Activated naive CD4-positive, alpha-beta T cell treated with anti-CD3 and anti-CD28 coated beads for 36 hours (primary cell): ENCODE measurements at regions of chr14 and their contacts with region 1.

Region 1: DNA sequence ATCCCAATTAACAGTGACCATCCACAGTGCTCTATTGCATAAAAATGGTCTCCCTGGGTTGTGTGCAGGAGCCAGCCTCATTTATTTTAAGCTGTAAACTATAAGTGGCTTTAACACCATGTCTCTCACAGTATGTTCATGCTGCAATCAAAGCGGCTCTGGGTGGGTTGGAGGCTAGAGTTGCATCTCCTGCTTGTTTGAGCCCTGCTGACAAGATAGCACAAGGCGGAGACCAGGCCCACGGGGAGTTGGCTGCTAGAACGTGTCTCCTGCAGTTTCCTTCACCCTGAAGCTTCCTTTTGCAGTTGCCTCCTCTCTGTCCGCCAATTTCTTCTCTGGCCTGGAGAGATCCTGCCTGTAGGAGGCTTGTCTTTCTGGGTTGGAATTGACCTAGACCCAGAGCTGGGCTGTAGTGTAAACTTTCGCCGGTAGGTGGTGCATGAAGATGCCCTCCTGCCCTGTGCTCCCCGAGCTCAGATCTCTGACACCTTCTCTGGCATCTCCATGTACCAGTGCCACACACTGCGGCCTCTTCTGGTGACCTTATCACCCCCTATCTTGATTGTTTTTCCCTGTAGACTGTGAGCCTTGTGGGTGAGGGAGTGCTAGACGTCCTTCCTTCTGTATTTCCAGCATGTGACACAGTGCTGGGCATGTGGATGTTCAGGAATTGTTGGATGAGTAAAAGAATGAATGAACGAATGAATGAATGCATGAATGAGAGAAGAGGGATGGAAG is 10.3 kb downstream of the OTUB2 start:
- DNase-seq: peak; percentile 88
- H3K4me3 Mint-ChIP-seq: no peak overlapping the region
- H3K27ac Mint-ChIP-seq: no peak overlapping the region
- H3K4me1 Mint-ChIP-seq: peaks cover 3% of the 10 kb centered on the region
- H3K27me3 Mint-ChIP-seq: no peaks in the 10 kb centered on the region

Region 2: GRCh38 chr14:94051115-94051514 is 14.6 kb after region 1 on chr14:
- CTCF ChIA-PET with region 1: interaction called, 27 read pairs
- intact Hi-C with region 1: no loop called
- DNase-seq: no peak
- H3K4me3 Mint-ChIP-seq: no peak overlapping the region
- H3K27ac Mint-ChIP-seq: no peak overlapping the region
- H3K4me1 Mint-ChIP-seq: peaks cover 2% of the 10 kb centered on the region
- H3K27me3 Mint-ChIP-seq: no peaks in the 10 kb centered on the region

Region 3: DNA sequence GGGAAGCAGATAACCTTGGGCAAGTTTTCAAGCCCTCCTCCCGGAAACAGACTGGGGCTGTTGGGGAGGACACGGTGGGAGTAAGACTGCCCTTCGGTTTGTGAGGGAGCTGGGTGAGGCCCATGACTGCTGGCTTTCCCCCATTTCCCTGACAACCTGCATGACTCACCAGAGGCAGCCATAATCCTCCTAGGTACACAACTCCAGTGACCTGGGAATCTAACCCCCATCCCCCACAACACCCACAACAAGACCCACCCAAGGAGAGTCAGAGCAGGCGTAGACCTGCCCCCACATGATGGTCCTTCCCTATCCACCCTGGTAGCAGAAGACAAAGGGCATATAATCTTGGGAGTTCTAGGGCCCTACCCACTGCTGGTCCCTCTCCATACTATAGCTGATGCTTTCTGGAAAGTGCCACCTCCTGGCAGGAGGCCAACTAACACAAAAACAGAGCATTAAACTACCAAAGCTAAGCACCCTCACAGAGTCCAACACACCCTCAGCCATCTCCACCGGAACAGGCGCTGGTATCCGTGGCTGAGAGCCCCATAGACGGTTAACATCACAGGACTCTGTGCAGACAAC is 29.7 kb after region 1 on chr14:
- CTCF ChIA-PET with region 1: interaction called, 16 read pairs
- intact Hi-C with region 1: no loop called
- DNase-seq: no peak
- H3K4me3 Mint-ChIP-seq: no peak overlapping the region
- H3K27ac Mint-ChIP-seq: peak overlapping the region; percentile 80
- H3K4me1 Mint-ChIP-seq: peaks cover 79% of the 10 kb centered on the region
- H3K27me3 Mint-ChIP-seq: no peaks in the 10 kb centered on the region

Region 4: GRCh38 chr14:94129111-94129757 is 92.8 kb after region 1 on chr14 and contains the start of gene IFI27L2:
- CTCF ChIA-PET with region 1: interaction called, 33 read pairs
- intact Hi-C with region 1: loop called (anchors 2 kb)
- DNase-seq: peak; percentile 88
- H3K4me3 Mint-ChIP-seq: peak within 1 kb of the TSS; percentile 88
- H3K27ac Mint-ChIP-seq: peak within 1 kb of the TSS; percentile 68
- H3K4me1 Mint-ChIP-seq: peaks cover 16% of the 10 kb centered on the region
- H3K27me3 Mint-ChIP-seq: no peaks in the 10 kb centered on the region
- total RNA-seq, gene IFI27L2: 67.0 to 73.4 TPM

Region 5: DNA sequence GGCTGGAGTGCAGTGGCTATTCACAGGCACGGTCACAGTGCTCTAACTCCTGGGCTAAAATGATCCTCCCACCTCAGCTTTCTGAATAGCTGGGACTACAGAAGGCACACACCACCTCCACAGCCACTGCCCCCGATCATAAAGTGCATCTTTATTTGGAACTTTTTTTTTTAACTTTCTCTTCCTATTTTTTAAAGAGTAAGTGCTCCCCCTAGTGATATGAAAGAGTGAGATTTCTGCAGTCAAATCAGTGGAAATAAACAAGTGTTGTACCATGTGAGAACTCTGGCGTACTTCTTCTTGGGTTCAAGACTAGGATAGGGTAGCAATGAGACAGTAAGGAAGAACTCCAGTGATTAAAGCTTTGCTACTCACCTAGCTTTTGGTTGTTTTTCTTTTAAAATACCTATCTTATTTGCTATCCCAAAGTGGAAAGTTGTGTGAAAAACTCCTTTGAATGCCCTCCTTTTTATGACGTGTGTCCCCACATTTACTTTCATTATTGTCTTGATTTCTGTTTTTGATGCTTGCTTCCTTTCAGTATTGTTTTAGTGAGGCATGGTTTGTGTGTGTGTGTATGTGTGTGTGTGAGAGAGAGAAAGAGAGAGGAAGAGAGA is 144.3 kb after region 1 on chr14:
- CTCF ChIA-PET with region 1: interaction called, 23 read pairs
- intact Hi-C with region 1: loop called (anchors 1 kb)
- DNase-seq: no peak
- H3K4me3 Mint-ChIP-seq: peak overlapping the region; percentile 31
- H3K27ac Mint-ChIP-seq: peak overlapping the region; percentile 9
- H3K4me1 Mint-ChIP-seq: peaks cover 45% of the 10 kb centered on the region
- H3K27me3 Mint-ChIP-seq: no peaks in the 10 kb centered on the region

Region 6: DNA sequence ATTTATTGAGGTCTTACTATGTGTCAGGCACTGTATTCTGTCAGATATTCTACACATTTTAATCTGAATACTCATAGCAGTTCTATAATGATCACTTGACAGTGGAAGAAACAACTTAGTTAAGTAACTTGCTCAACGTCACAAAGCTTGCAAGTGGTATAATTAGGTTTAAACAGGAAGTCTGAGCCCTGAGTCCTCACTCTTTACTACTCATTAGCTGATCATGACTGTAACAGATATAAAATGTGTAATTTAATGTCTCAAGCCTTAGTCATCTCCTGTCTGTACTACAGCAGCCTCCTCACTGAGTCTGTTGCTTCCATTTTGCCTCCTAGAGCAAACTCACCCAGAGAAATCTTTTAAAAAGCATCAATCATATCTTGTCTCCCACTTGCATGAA is 176.5 kb after region 1 on chr14:
- CTCF ChIA-PET with region 1: no interaction called
- intact Hi-C with region 1: no loop called
- DNase-seq: no peak
- H3K4me3 Mint-ChIP-seq: no peak overlapping the region
- H3K27ac Mint-ChIP-seq: no peak overlapping the region
- H3K4me1 Mint-ChIP-seq: no peaks in the 10 kb centered on the region
- H3K27me3 Mint-ChIP-seq: peaks cover 6% of the 10 kb centered on the region

Region 7: DNA sequence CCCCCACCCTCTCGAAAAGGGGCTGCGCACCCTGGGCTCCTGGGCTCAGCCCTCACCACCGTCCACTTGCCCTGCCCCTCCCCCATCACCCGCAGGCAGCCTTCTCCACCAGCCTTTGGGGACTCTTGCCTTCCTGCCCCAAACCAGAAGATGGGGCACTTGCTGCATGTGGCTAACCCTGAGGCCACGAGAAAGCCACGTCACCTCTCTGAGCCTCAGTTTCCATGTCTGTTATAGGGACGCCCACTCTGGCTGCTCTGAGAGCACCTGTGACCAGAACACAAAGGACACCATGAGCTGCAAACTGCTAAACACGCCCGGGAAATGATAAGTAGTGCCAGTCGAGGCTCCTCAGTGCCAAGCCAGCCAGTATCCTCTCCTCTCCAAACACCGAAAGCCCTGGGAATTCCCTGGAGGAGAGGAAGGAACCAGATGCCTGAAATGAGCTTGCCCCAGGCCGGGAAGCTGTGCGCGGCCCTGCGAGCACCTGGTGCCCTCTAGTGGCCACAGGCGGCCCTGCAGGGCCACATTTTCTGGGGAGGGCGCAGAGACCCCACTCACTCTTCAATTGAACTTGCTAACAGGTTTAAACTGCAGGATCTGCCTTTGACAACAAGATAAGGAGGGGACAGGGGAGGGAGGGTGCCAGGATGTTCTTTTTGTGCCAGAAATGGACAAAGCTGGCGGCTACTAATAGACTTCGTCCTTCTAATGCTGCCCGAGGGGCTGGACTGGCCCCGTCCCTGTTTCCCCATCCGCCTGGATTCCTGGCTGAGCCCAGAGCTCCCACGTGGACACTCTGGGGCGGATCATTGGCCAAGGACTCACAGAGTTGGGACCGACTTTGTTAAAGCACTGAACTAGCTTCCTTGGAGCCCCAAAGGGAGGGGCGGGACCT is 449.7 kb after region 1 on chr14:
- CTCF ChIA-PET with region 1: interaction called, 7 read pairs
- intact Hi-C with region 1: loop called (anchors 1 kb)
- DNase-seq: peak; percentile 52
- H3K4me3 Mint-ChIP-seq: no peak overlapping the region
- H3K27ac Mint-ChIP-seq: no peak overlapping the region
- H3K4me1 Mint-ChIP-seq: peaks cover 4% of the 10 kb centered on the region
- H3K27me3 Mint-ChIP-seq: peaks cover 21% of the 10 kb centered on the region